HCT116 (cell line): ENCODE measurements at regions of chr9 and their contacts with region 1.

Region 1: DNA sequence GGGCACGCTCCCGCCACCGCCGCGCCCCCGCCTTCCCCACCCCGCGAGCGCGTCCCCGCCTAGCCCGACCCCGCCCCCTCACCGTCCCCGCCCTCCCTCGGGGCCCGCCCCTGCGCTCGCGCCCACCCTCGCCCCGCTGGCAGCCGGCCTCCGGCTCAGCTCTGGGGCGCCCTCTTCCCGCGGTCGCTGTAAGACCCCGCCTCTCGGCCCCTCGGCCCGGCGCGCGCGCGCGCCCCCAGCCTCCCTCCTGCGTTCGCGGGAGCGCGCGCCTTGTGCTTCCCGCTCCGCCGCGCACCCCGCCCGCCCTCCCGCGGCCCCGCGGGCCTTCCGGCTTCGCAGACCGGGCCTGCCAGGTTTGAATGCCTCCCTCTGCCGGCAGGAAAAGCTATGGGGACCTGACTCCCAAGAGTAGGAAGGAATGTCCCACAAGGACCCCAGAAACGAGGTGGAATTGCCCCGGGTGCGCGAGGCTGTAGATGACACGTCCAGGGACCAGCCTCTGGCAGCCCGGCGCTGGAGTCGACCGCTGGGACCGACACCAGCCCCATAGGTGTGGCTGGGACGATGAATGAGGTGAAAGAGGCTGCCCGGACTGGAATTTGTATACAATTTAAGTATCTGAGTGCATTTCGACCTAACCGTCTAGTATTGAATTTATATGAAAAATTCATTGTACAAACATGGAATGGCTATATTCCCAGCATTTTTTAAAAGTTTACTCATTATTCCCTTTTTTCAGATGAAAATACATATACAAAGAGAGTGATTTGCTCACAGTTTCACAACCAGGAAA is 416 bp upstream of the PTBP3 start:
- DNase-seq: peak; percentile 87
- ATAC-seq: peak; percentile 85
- H3K4me3 ChIP-seq: peak overlapping the region; percentile 60 to 72
- H3K27ac ChIP-seq: peak overlapping the region; percentile 100
- H3K4me1 ChIP-seq: peaks cover 23 to 43% of the 10 kb centered on the region in 2 experiments
- H3K27me3 ChIP-seq: no peaks in the 10 kb centered on the region
- CTCF ChIP-seq: peak; percentile 34 to 49 (median 43); a peak in 5 of 6 replicates
- POLR2A ChIP-seq: no peak
- RAD21 ChIP-seq: peak; percentile 55

Region 2: DNA sequence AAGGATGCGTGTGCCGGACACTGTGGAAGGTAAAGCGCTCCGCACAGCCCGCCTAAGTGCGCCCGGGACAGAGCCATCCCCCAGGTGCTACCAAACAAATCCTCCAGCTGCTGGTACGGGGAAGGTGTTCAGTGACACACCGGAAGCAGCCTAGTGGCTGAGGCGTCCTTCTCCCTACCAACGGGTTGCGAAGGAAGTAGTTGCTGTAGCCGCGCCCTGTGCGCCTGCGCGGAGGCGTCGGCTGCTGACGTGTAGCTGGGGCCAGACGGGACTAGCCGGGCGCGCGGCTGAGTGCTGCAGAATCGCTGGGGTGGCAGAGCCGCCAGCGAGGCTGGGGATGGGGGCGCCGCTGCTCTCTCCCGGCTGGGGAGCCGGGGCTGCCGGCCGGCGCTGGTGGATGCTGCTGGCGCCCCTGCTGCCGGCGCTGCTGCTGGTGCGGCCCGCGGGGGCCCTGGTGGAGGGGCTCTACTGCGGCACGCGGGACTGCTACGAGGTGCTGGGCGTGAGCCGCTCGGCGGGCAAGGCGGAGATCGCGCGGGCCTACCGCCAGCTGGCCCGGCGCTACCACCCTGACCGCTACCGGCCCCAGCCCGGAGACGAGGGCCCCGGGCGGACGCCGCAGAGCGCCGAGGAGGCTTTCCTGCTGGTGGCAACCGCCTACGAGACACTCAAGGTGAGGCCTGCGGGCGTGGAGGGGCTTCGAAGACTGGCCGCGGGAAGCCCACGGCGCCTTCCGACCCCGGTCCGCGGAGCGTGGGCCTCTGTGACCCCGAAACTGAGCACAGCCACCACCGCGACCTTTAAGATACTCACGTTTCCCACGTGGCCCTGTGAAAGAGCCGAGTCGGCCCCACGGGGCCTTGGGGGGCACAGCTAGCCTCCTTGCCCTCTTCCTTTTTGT is 702.5 kb before region 1 on chr9 and contains the start of gene DNAJC25:
- CTCF ChIA-PET with region 1: no interaction called
- POLR2A ChIA-PET with region 1: no interaction called
- RAD21 ChIA-PET with region 1: no interaction called
- intact Hi-C with region 1: loop called (anchors 5 kb)
- DNase-seq: peak; percentile 97
- ATAC-seq: peak; percentile 98
- H3K4me3 ChIP-seq: peak within 1 kb of the TSS; percentile 93
- H3K27ac ChIP-seq: peak within 1 kb of the TSS; percentile 81
- H3K4me1 ChIP-seq: peaks cover 2 to 17% of the 10 kb centered on the region in 2 experiments; a peak in 2 of 4 replicates
- H3K27me3 ChIP-seq: no peaks in the 10 kb centered on the region
- CTCF ChIP-seq: no peak
- POLR2A ChIP-seq: peak; percentile 99
- RAD21 ChIP-seq: no peak
- total RNA-seq, gene DNAJC25: 7.1 TPM

Region 3: DNA sequence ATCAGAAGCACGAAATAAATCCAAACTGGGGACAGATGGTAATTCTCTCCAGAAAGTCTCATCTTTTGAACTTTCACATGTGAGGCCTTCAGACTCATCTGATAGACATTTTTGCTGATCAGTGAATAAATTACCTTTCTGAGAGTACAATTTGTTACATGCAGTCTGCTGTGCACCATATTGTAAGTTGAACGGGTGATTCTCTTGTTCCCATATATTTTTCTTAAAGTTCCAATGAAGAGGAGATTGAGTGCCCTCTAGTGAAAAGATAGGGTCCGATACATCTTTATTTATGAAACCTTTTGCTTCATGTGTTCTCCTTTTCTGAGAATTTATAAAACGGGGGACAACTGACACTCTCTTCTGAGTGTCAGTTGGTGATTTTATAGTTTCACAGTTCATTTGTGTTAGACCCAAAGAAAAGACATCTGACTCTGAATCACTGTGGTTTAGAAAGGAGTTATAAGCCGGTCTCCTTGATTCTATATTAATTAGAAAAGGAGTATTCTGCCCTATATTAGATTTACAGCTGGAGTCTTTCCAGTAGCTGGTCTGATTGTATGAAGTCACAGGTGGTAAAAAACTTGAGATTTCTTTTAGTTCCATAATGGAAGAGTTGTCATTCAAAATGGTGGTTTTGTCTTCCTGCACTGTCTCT is 642.0 kb before region 1 on chr9:
- CTCF ChIA-PET with region 1: no interaction called
- POLR2A ChIA-PET with region 1: no interaction called
- RAD21 ChIA-PET with region 1: no interaction called
- intact Hi-C with region 1: no loop called
- DNase-seq: peak; percentile 24
- ATAC-seq: peak; percentile 74
- H3K4me3 ChIP-seq: no peak overlapping the region
- H3K27ac ChIP-seq: no peak overlapping the region
- H3K4me1 ChIP-seq: peaks cover 0 to 4% of the 10 kb centered on the region in 2 experiments; a peak in 1 of 4 replicates
- H3K27me3 ChIP-seq: no peaks in the 10 kb centered on the region
- CTCF ChIP-seq: peak; percentile 39 to 57 (median 54); a peak in 5 of 6 replicates
- POLR2A ChIP-seq: no peak
- RAD21 ChIP-seq: peak; percentile 68

Region 4: GRCh38 chr9:112174218-112174964 is 159.4 kb before region 1 on chr9:
- CTCF ChIA-PET with region 1: no interaction called
- POLR2A ChIA-PET with region 1: no interaction called
- RAD21 ChIA-PET with region 1: no interaction called
- intact Hi-C with region 1: loop called (anchors 5 kb)
- DNase-seq: no peak
- ATAC-seq: peak; percentile 86
- H3K4me3 ChIP-seq: peak overlapping the region; percentile 43 to 60
- H3K27ac ChIP-seq: peak overlapping the region; percentile 77
- H3K4me1 ChIP-seq: peaks cover 19 to 42% of the 10 kb centered on the region in 2 experiments
- H3K27me3 ChIP-seq: no peaks in the 10 kb centered on the region
- CTCF ChIP-seq: no peak
- POLR2A ChIP-seq: no peak
- RAD21 ChIP-seq: no peak

Region 5: GRCh38 chr9:112379177-112380101 is 45.6 kb after region 1 on chr9:
- CTCF ChIA-PET with region 1: interaction called, 3 read pairs
- POLR2A ChIA-PET with region 1: interaction called, 4 read pairs
- RAD21 ChIA-PET with region 1: no interaction called
- intact Hi-C with region 1: loop called (anchors 1 kb)
- DNase-seq: peak; percentile 96
- ATAC-seq: peak; percentile 94
- H3K4me3 ChIP-seq: peak overlapping the region; percentile 86 to 92
- H3K27ac ChIP-seq: peak overlapping the region; percentile 92
- H3K4me1 ChIP-seq: peaks cover 7 to 12% of the 10 kb centered on the region in 2 experiments; a peak in 3 of 4 replicates
- H3K27me3 ChIP-seq: no peaks in the 10 kb centered on the region
- CTCF ChIP-seq: no peak
- POLR2A ChIP-seq: peak; percentile 85
- RAD21 ChIP-seq: no peak